ENCODE measurements at regions of chr17 and their contacts with region 1.

Region 1: GRCh38 chr17:7745748-7746470 is 28.4 kb downstream of the DNAH2 start:
- DNase-seq: peak in 1 of 4 donors; percentile 15
- ATAC-seq: no peak
- H3K4me3 ChIP-seq: no peak overlapping the region
- H3K27ac ChIP-seq: no peak overlapping the region
- H3K4me1 ChIP-seq: no peaks in the 10 kb centered on the region
- H3K27me3 ChIP-seq: peaks cover 0 to 4% of the 10 kb centered on the region in 2 donors
- CTCF ChIP-seq: no peak
- POLR2A ChIP-seq: no peak

Region 2: GRCh38 chr17:7972131-7972785 is 226.3 kb after region 1 on chr17:
- intact Hi-C with region 1: no loop called
- DNase-seq: no peak
- ATAC-seq: no peak
- H3K4me3 ChIP-seq: no peak overlapping the region
- H3K27ac ChIP-seq: no peak overlapping the region
- H3K4me1 ChIP-seq: no peaks in the 10 kb centered on the region
- H3K27me3 ChIP-seq: no peaks in the 10 kb centered on the region
- CTCF ChIP-seq: no peak
- POLR2A ChIP-seq: no peak

Region 3: DNA sequence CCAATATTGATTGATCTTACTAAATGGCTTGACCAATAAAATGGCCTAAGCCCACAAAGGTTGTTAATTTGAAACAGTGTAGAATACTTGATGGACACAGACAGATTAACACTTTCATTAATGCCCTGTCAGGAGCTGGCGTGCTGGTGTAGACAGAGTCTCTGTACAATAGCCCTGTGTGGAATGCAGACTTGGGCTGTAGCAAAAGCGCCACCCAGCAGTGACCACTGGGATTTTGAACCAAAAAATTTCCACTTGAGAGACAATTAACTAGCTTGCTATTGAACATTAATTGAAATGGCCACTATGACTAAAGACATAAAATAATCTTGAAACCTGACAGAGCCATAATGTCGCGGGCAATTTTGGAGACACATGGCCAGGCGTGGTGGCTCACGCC is 236.8 kb after region 1 on chr17:
- intact Hi-C with region 1: loop called (anchors 5 kb)
- DNase-seq: no peak
- ATAC-seq: no peak
- H3K4me3 ChIP-seq: no peak overlapping the region
- H3K27ac ChIP-seq: no peak overlapping the region
- H3K4me1 ChIP-seq: no peaks in the 10 kb centered on the region
- H3K27me3 ChIP-seq: no peaks in the 10 kb centered on the region
- CTCF ChIP-seq: peak in 1 of 7 experiments; percentile 6
- POLR2A ChIP-seq: no peak

Region 4: DNA sequence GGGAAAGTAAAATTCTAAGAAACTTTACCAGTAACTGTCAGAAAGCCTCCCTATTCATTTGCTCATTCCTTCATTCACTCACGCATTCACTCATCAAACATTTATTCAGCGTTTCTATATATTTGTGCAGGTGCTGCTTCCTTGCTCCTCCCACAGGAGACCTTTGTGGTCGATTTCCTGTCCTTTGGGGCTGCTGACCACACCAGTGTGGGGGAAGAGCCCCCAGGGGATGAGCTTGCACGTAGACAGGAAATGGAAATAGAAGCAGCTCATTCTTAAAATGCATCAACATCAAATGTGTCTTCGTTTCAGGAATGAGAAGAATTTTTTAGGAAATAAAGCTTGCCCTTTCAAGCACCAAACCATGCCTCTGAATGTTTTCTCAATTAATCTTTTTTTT is 1112.0 kb after region 1 on chr17:
- intact Hi-C with region 1: no loop called
- DNase-seq: no peak
- ATAC-seq: no peak
- H3K4me3 ChIP-seq: no peak overlapping the region
- H3K27ac ChIP-seq: no peak overlapping the region
- H3K4me1 ChIP-seq: peaks cover 10% of the 10 kb centered on the region
- H3K27me3 ChIP-seq: no peaks in the 10 kb centered on the region
- CTCF ChIP-seq: no peak
- POLR2A ChIP-seq: no peak

Measured in body of pancreas (tissue), 4 donors.